ENCODE measurements at regions of chr3 and their contacts with region 1.

Region 1: GRCh38 chr3:52001443-52001974 is 5.8 kb upstream of the RPL29 start:
- DNase-seq: peak; percentile 97
- ATAC-seq: peak; percentile 76
- H3K4me3 Mint-ChIP-seq: no peak overlapping the region
- H3K27ac Mint-ChIP-seq: peak overlapping the region; percentile 86
- H3K4me1 Mint-ChIP-seq: peaks cover 42% of the 10 kb centered on the region
- H3K27me3 Mint-ChIP-seq: no peaks in the 10 kb centered on the region
- CTCF ChIP-seq: peak; percentile 90

Region 2: GRCh38 chr3:51982782-51983577 is 18.5 kb before region 1 on chr3 and contains the start of gene ACY1:
- CTCF ChIA-PET with region 1: interaction called, 36 read pairs
- POLR2A ChIA-PET with region 1: interaction called, 4 read pairs
- DNase-seq: peak; percentile 85
- ATAC-seq: peak; percentile 78
- H3K4me3 Mint-ChIP-seq: peak within 1 kb of the TSS; percentile 84
- H3K27ac Mint-ChIP-seq: peak within 1 kb of the TSS; percentile 96
- H3K4me1 Mint-ChIP-seq: peaks cover 21% of the 10 kb centered on the region
- H3K27me3 Mint-ChIP-seq: peaks cover 3% of the 10 kb centered on the region; the same call in 1 of the 2 replicates
- CTCF ChIP-seq: 0 out of 2 replicates have a peak, but pooled peaks have one; percentile 1
- total RNA-seq, gene ACY1: 53.8 to 66.3 TPM (median 61.6 TPM) in 3 replicates

Region 3: GRCh38 chr3:52032702-52033408 is 31.3 kb after region 1 on chr3:
- CTCF ChIA-PET with region 1: interaction called, 115 read pairs
- POLR2A ChIA-PET with region 1: no interaction called
- DNase-seq: no peak
- ATAC-seq: no peak
- H3K4me3 Mint-ChIP-seq: no peak overlapping the region
- H3K27ac Mint-ChIP-seq: no peak overlapping the region
- H3K4me1 Mint-ChIP-seq: peaks cover 7% of the 10 kb centered on the region; the same call in 1 of the 2 replicates
- H3K27me3 Mint-ChIP-seq: no peaks in the 10 kb centered on the region
- CTCF ChIP-seq: no peak

Region 4: DNA sequence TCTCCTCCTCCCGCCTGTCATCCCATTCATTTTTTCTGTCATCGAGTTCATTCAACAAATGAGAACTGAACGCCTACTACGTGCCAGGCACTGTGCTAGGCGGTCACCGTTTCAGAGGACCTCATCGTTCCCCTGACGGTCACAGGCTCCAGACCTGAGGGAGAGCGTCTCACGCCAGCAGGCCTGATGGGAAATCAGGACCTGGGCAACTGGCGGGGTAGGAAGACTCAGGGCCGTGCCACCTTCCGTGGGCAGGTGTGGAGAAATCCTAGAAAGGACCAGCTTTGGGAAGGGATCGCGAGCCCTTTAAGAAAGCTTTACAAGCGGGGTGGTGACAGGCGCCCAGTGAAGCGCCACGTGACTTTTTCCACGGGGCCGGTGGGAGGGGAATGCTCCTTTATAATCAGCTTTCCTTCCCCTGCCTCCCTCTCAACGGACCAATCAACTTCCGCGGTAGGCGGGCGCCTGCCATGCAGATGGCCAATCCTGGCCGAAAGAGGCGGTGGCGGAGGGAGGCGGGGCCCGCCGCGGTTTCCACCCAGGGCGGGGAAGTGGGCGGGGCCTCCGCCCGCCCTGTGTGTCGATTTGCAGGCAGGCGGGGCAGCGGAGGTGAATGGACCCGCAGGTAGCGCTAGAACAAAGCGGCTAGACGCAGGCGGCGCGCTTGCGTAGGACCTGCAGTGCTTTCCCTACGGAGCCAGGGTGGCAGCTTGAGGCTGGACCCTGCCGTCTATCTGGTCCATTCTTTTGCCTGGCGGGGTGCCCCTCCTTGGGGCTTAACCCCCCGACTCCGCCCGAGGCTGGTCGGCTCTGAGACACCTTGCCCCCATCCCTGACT is 55.7 kb after region 1 on chr3:
- CTCF ChIA-PET with region 1: interaction called, 382 read pairs
- POLR2A ChIA-PET with region 1: interaction called, 9 read pairs
- DNase-seq: peak; percentile 99
- ATAC-seq: peak; percentile 77
- H3K4me3 Mint-ChIP-seq: peak overlapping the region; percentile 83
- H3K27ac Mint-ChIP-seq: peak overlapping the region; percentile 94
- H3K4me1 Mint-ChIP-seq: peaks cover 30% of the 10 kb centered on the region
- H3K27me3 Mint-ChIP-seq: peaks cover 21% of the 10 kb centered on the region
- CTCF ChIP-seq: no peak

Region 5: GRCh38 chr3:52090131-52090932 is 88.8 kb after region 1 on chr3:
- CTCF ChIA-PET with region 1: interaction called, 37 read pairs
- POLR2A ChIA-PET with region 1: no interaction called
- DNase-seq: no peak
- ATAC-seq: no peak
- H3K4me3 Mint-ChIP-seq: no peak overlapping the region
- H3K27ac Mint-ChIP-seq: no peak overlapping the region; the same call in 1 of the 2 replicates
- H3K4me1 Mint-ChIP-seq: no peaks in the 10 kb centered on the region
- H3K27me3 Mint-ChIP-seq: no peaks in the 10 kb centered on the region
- CTCF ChIP-seq: no peak

Region 6: DNA sequence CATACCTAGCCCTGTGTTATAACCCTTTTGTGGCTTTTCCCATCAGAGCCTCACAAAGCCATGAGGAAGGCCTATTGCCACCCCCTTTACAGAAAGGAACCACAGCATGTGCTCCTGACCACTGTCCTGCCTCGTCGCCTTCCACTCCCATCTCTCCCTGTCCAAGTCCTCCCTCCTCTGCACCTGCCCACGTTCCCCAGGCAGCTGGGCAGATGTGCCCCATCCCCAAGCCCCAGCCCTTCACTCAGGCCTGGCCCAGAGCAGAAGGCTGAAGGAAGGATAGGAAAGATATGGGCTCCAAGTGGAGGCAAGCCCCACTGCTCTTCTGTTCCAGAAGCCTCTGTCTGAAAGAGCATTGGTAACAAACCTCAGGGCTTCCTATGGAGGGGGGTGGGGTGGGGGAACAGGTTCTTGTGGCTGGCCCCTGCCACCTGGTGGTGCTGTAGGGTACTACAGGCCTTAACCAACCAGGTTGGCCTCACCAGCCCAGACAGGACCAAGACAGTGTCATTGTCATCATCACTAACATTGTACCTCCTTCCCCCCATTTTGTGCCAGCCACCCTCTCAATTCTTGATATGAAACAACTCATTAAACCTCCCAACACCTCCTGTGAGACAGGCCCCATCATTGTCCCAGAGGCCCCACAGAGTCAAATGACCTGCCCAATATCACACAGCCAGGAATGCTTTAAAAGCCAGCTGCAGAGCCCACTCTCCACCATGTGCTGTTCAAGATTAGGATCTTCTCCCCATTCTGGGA is 142.7 kb after region 1 on chr3:
- CTCF ChIA-PET with region 1: interaction called, 70 read pairs
- POLR2A ChIA-PET with region 1: no interaction called
- DNase-seq: peak; percentile 87
- ATAC-seq: peak; percentile 93
- H3K4me3 Mint-ChIP-seq: no peak overlapping the region
- H3K27ac Mint-ChIP-seq: peak overlapping the region; percentile 41; the same call in 1 of the 2 replicates
- H3K4me1 Mint-ChIP-seq: peaks cover 5% of the 10 kb centered on the region
- H3K27me3 Mint-ChIP-seq: no peaks in the 10 kb centered on the region
- CTCF ChIP-seq: peak; percentile 98

Region 7: DNA sequence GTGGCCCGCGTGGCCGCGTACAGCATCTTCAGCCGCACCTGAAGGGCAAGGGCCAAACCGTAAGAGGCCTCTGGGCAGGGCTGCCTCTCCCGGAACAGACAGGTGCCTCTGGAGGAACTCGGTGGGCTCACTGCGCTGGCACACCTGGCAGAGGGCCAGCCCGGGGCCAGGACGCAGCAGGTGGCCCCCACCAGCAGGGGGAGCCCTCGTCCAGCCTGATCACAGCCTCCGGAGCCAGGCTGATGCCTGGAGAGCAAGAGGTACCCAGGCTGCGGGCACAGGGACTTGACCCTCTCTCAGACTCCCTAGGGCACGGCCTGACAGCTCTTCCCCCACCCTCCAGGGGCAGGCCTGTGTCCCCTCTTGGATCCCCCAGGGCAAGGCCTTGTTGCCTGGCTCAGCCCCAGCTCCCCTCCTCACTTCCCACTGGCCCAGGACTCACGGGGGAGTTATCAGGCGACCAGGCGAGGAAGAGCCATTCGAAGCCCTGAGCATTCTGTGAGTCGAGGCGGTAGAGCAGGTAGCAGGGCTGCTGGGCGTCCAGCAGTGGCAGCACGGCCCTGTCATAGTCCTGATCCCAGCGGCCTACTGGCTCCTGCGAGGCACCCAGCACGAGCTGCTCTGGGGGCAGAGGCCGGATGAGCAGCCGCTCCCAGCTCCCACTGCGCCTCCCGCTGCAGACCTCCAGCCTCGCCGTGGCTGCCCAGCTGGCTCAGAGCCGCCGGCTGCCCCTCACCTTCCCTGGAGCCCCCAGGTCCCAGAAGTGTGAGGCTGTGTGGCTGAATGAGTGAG is 230.2 kb after region 1 on chr3:
- CTCF ChIA-PET with region 1: interaction called, 11 read pairs
- POLR2A ChIA-PET with region 1: no interaction called
- DNase-seq: peak; percentile 85
- ATAC-seq: peak; percentile 75
- H3K4me3 Mint-ChIP-seq: no peak overlapping the region
- H3K27ac Mint-ChIP-seq: no peak overlapping the region; the same call in 1 of the 2 replicates
- H3K4me1 Mint-ChIP-seq: peaks cover 9% of the 10 kb centered on the region
- H3K27me3 Mint-ChIP-seq: no peaks in the 10 kb centered on the region
- CTCF ChIP-seq: peak; percentile 91